BJ (cell line): ENCODE measurements at regions of chr10 and their contacts with region 1.

Region 1: DNA sequence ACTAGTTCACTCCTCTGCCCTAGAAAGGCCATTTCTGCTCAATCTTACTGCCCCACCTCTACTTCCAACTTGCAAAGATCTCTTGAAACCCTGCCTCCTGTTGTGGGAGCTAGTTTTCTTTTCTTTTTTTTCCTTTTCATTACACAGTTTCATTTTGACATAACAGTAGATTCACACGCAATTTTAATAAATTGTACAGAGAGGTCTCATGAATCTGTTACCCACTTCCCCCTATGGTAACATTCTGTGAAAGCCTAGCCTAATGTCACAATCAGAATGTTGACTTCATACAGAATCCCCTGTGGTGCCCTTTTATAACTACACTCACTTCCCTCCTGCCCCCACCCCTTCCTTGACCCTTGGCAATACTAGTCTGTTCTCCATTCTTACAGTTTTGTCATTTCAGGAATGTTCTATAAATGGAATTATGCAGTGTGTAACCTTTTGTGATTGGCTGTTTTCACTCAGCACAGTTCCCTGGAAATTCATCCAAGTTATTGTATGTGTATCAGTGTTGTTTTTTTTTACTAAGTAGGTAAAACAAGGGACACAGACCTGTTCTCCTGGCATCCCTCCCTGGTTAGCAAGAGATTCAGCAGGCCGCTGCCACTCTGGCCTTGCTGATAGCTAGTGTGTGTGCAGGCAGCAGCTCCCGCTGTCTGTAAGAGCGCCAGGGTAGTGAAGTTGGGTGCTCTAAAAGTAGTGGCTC is 21.5 kb downstream of the CHST3 start:
- DNase-seq: peak; percentile 59
- H3K4me3 ChIP-seq: no peak overlapping the region
- H3K27me3 ChIP-seq: no peaks in the 10 kb centered on the region
- CTCF ChIP-seq: peak; percentile 23; the same call in 1 of the 2 replicates

Region 2: DNA sequence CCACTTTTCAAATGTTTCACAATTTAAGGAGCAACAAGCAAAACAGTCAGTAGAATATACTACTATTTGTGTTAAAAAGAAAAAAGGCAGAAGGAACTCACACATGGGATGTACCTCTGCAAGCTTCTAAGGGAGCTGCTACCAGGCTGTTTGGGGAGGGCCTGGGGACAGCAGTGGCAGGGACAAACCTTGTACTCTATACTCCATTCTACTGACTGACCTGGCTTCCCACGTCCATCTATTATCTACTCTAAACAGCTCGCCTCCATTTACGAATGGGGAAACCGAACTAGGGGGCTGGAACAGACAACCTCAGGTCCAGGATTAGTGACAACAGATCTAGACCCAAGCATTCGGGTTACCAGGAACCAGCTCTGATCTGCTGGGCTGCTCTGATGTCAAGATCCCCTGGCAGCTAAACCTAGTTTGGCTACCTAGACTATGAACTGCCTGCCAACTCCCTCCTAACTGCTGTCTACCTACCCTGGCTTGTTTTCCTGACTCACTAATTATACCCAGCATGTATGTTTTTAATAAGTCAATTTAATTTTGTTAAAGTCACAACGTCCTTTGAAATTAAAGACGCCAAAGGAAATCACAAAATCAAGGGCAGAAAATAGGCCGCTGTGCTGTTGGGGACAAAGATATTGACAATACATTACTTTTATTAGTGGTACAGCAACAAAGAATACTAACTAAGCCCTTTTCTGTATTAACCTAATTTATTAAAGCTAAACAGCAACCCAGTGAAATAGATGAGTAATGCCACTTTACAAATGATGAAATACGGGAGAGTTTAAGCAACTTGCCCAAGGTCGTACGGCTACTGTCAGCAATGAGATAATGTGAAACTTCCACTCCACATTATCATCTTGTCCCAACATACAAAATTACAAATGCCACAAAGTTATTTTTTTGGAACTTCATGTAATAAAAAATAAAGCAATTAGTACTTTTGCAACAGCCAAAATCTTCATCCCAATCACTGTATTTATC is 140.0 kb before region 1 on chr10:
- CTCF ChIA-PET with region 1: no interaction called
- POLR2A ChIA-PET with region 1: no interaction called
- DNase-seq: no peak
- H3K4me3 ChIP-seq: no peak overlapping the region
- H3K27me3 ChIP-seq: no peaks in the 10 kb centered on the region
- CTCF ChIP-seq: no peak

Region 3: GRCh38 chr10:71933651-71934050 is 52.0 kb before region 1 on chr10:
- CTCF ChIA-PET with region 1: no interaction called
- POLR2A ChIA-PET with region 1: no interaction called
- DNase-seq: no peak
- H3K4me3 ChIP-seq: no peak overlapping the region
- H3K27me3 ChIP-seq: no peaks in the 10 kb centered on the region
- CTCF ChIP-seq: no peak

Region 4: DNA sequence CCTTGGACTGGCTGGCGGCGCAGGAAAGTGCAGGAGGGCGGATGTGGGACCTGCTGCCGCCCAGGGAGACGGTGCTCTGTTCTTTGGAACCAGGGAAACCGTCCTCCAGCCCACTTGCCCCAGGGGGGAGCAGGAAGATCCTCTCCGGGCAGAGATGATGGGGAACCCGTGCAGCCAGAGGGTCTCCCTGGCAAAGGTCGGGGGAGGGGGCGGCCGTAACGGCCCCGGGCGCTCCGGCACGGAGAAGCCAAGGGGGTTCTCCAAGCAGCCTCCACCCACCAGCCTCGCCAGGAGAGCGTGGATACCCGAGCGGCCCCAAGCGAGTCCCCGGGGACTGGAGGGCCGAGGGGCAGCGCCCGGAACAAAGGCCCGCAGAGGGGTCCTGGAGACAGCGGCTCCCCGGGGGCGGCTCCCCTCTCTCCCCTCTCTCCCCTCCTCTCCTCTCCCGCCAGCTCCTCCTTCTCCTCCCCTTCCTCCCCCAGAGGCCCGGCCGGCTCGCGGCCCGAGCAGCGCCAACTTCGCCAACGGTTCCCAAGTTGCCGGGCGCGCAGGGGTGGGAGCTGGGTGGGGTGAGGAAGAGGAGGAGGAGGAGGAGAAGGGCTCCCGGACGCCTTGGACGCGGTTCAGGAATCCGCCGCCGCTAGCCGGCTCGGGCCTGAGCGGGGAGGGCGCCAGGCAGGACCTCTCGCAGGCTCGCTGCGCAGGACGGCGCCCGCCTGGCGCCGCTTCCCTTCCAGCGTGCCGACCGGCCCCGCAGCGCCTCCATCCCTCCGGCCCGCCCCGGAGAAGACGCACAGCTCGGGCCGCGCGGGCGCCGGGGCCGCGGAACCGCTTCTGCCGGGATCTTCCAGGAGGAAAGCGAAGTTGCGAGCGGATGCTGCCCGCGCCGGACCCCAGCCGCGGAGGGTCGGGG is 21.7 kb before region 1 on chr10 and contains the start of gene CHST3:
- CTCF ChIA-PET with region 1: interaction called, 11 read pairs
- POLR2A ChIA-PET with region 1: interaction called, 5 read pairs
- DNase-seq: no peak
- H3K4me3 ChIP-seq: peak within 1 kb of the TSS; percentile 86
- H3K27me3 ChIP-seq: no peaks in the 10 kb centered on the region
- CTCF ChIP-seq: no peak
- polyA plus RNA-seq, gene CHST3: 15.3 and 20.9 TPM in 2 replicates

Region 5: GRCh38 chr10:71974489-71975021 is 11.1 kb before region 1 on chr10:
- CTCF ChIA-PET with region 1: interaction called, 12 read pairs
- POLR2A ChIA-PET with region 1: interaction called, 3 read pairs
- DNase-seq: no peak
- H3K4me3 ChIP-seq: no peak overlapping the region
- H3K27me3 ChIP-seq: no peaks in the 10 kb centered on the region
- CTCF ChIP-seq: no peak

Region 6: DNA sequence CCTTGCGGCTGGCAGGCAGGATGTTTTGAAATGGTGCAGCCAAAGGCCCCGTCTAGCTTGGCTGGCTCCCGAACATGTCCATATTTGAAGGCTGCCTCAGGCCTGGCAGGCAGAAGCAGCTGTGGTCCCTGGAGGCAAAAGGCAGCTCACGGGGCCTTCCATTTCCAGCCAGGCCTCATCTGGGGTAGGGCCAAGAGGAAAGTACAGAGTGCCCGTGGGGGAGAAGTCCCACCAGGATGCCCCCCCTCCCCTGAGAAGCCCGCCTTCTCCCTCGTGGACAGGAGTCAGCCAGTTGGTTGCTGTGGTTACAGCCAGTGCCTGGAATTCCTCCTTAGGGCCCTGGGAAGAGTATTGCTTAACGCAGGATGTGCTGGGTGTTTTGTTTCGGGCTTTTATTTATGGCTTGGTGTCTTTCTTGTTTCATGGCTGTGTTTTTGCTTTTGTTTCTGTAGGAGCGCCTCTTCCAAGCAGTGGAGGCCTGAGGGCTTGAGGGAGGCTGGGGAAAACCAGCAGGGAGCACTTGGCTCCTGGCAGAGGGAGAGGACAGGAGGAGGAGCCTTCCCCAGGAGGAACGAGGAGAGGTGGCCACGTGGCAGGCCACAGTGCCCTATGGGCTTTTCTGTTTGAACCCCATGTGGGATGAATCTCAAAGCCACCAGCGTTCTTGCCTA is 23.9 kb after region 1 on chr10:
- CTCF ChIA-PET with region 1: no interaction called
- POLR2A ChIA-PET with region 1: no interaction called
- DNase-seq: peak; percentile 96
- H3K4me3 ChIP-seq: no peak overlapping the region
- H3K27me3 ChIP-seq: no peaks in the 10 kb centered on the region
- CTCF ChIP-seq: no peak